ENCODE measurements at regions of chr10 and their contacts with region 1.

Region 1: GRCh38 chr10:110036640-110037039 is 28.9 kb downstream of the ADD3 start:
- DNase-seq: no peak
- ATAC-seq: no peak
- H3K4me3 ChIP-seq: no peak overlapping the region
- H3K4me3 Mint-ChIP-seq: peak overlapping the region in 6 of 10 donors; percentile 6 to 66 (median 30)
- H3K27ac ChIP-seq: no peak overlapping the region
- H3K27ac Mint-ChIP-seq: peak overlapping the region in 7 of 9 donors; percentile 42 to 91 (median 69)
- H3K4me1 ChIP-seq: peaks cover 25 to 69% of the 10 kb centered on the region in 2 donors
- H3K4me1 Mint-ChIP-seq: peaks cover 61 to 98% (median 92%) of the 10 kb centered on the region in 7 donors
- H3K27me3 ChIP-seq: no peaks in the 10 kb centered on the region
- H3K27me3 Mint-ChIP-seq: no peaks in the 10 kb centered on the region

Region 2: DNA sequence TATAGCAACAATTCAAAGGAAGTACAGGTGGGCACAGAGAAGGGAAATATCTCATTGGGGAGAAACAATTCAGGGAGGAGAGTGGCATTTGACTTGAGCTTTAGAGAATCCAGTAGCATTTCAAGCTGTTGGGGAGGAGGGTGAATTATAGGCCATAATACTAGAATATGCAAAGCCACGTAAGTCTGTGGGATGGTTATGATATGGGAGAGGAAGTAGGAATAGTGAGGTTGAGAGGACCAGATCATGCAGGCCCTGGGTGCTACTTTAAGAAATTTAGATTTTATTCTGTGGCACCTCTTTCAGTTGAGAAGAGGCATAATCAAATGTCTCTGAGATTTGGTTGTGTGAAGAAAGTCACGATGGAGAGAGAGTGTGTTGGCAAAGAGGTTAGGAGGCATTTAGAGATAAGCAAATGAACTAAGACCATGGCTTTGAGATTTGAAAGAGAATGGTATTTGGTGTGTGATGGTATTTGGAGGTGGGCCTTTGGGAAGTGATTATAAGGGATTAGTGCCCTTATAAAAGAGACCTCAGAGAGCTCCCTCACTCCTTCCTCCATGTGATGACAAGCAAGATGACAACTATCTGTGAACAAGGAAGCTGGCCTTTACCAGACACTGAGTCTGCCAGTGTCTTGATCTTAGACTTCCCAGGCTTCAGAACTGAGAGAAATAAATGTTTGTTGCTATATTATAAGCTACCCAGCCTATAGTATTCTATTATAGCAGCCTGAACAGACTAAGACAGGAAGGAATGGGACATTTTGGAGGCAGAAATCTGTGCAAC is 13.7 kb before region 1 on chr10:
- CTCF ChIA-PET with region 1: no interaction called
- POLR2A ChIA-PET with region 1: interaction called, 5 read pairs
- intact Hi-C with region 1: loop called in 1 of 2 experiments (anchors 2 kb)
- DNase-seq: no peak
- ATAC-seq: peak; percentile 38
- H3K4me3 ChIP-seq: no peak overlapping the region
- H3K4me3 Mint-ChIP-seq: peak overlapping the region in 9 of 10 donors; percentile 23 to 70 (median 44)
- H3K27ac ChIP-seq: no peak overlapping the region
- H3K27ac Mint-ChIP-seq: peak overlapping the region in 8 of 9 donors; percentile 9 to 89 (median 36)
- H3K4me1 ChIP-seq: peaks cover 21 to 44% of the 10 kb centered on the region in 2 donors
- H3K4me1 Mint-ChIP-seq: peaks cover 54 to 94% (median 86%) of the 10 kb centered on the region in 7 donors
- H3K27me3 ChIP-seq: no peaks in the 10 kb centered on the region
- H3K27me3 Mint-ChIP-seq: no peaks in the 10 kb centered on the region

Region 3: GRCh38 chr10:110052916-110053315 is 16.3 kb after region 1 on chr10:
- CTCF ChIA-PET with region 1: interaction called, 4 read pairs
- POLR2A ChIA-PET with region 1: interaction called, 5 read pairs
- intact Hi-C with region 1: loop called in 1 of 2 experiments (anchors 2 kb)
- DNase-seq: no peak
- ATAC-seq: no peak
- H3K4me3 ChIP-seq: no peak overlapping the region
- H3K4me3 Mint-ChIP-seq: peak overlapping the region in 3 of 10 donors; percentile 1 to 61 (median 37)
- H3K27ac ChIP-seq: no peak overlapping the region
- H3K27ac Mint-ChIP-seq: peak overlapping the region; percentile 56 to 93 (median 83)
- H3K4me1 ChIP-seq: peaks cover 13 to 38% of the 10 kb centered on the region in 2 donors
- H3K4me1 Mint-ChIP-seq: peaks cover 42 to 89% (median 83%) of the 10 kb centered on the region in 7 donors
- H3K27me3 ChIP-seq: no peaks in the 10 kb centered on the region
- H3K27me3 Mint-ChIP-seq: no peaks in the 10 kb centered on the region

Region 4: GRCh38 chr10:110430369-110431273 is 394.0 kb after region 1 on chr10:
- CTCF ChIA-PET with region 1: no interaction called
- POLR2A ChIA-PET with region 1: no interaction called
- intact Hi-C with region 1: no loop called
- DNase-seq: no peak
- ATAC-seq: no peak
- H3K4me3 ChIP-seq: no peak overlapping the region
- H3K4me3 Mint-ChIP-seq: no peak overlapping the region
- H3K27ac ChIP-seq: no peak overlapping the region
- H3K27ac Mint-ChIP-seq: no peak overlapping the region
- H3K4me1 ChIP-seq: no peaks in the 10 kb centered on the region
- H3K4me1 Mint-ChIP-seq: peaks cover 0 to 38% (median 4%) of the 10 kb centered on the region in 7 donors
- H3K27me3 ChIP-seq: no peaks in the 10 kb centered on the region
- H3K27me3 Mint-ChIP-seq: no peaks in the 10 kb centered on the region

Region 5: DNA sequence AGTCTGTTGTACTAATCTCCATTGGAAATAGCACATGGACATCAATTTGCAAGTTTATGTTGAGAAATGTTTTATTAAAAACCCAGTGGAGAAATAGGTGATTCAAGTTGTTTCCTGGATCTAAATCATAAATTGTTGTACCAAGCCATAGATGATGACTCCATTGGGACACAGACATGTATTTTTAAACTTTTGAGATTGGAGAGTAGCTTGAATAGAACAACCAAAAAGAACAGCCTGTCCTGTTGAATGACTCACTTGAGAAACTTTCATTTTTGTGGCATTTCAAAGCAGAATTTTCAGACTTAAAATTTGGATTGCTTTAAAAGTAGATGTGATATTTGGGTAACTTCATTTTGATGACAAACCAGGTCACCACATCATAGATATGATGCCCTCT is 1949.4 kb after region 1 on chr10:
- CTCF ChIA-PET with region 1: no interaction called
- POLR2A ChIA-PET with region 1: no interaction called
- intact Hi-C with region 1: no loop called
- DNase-seq: no peak
- ATAC-seq: no peak
- H3K4me3 ChIP-seq: no peak overlapping the region
- H3K4me3 Mint-ChIP-seq: no peak overlapping the region
- H3K27ac ChIP-seq: no peak overlapping the region
- H3K27ac Mint-ChIP-seq: no peak overlapping the region
- H3K4me1 ChIP-seq: no peaks in the 10 kb centered on the region
- H3K4me1 Mint-ChIP-seq: no peaks in the 10 kb centered on the region
- H3K27me3 ChIP-seq: no peaks in the 10 kb centered on the region
- H3K27me3 Mint-ChIP-seq: peaks cover 1 to 23% (median 10%) of the 10 kb centered on the region in 5 donors